ENCODE measurements at regions of chr5 and their contacts with region 1.

Region 1: GRCh38 chr5:113513384-113514288 is at the start of gene YTHDC2:
- DNase-seq: peak; percentile 92
- ATAC-seq: peak; percentile 94
- H3K4me3 Mint-ChIP-seq: peak within 1 kb of the TSS; percentile 93
- H3K27ac Mint-ChIP-seq: peak within 1 kb of the TSS; percentile 93
- H3K4me1 Mint-ChIP-seq: peaks cover 25% of the 10 kb centered on the region
- H3K27me3 Mint-ChIP-seq: peaks cover 7% of the 10 kb centered on the region
- CTCF ChIP-seq: no peak
- total RNA-seq, gene YTHDC2: 26.8 to 28.2 TPM

Region 2: GRCh38 chr5:113022661-113023060 is 491.0 kb before region 1 on chr5:
- CTCF ChIA-PET with region 1: no interaction called
- POLR2A ChIA-PET with region 1: no interaction called
- intact Hi-C with region 1: loop called (anchors 10 kb)
- DNase-seq: no peak
- ATAC-seq: peak; percentile 86
- H3K4me3 Mint-ChIP-seq: no peak overlapping the region
- H3K27ac Mint-ChIP-seq: peak overlapping the region; percentile 57
- H3K4me1 Mint-ChIP-seq: peaks cover 58% of the 10 kb centered on the region
- H3K27me3 Mint-ChIP-seq: no peaks in the 10 kb centered on the region
- CTCF ChIP-seq: no peak

Region 3: DNA sequence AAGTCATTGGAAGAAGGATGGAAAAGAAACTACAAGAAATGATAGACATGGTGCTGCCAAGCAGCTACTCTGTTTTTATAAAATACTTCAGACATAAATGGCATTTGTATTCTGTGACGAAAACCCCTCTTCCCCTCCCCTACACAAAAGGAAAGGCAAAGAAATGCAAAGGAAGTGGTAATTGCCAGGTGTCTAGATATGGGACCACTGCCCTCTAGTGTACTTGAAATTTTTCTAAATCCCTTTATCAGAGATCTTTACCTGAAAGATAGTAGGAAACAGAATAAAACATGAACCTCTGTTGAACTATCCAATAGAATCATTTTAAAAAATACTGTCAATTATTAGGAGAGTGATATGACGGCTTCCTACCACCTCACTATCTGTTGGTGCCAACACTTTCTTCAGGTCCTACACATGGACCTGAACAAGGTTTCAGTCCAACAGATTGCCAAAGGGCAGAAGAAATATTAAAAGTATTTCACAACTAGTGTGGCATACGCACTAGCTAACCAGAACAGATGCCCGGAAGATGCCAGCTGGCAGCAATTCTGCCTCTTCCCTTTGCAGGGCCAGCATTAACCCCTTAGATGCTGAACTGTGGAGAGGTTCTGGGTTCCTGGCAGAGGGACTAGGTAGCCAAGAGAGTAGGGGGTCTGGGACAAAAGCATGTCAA is 183.0 kb before region 1 on chr5:
- CTCF ChIA-PET with region 1: interaction called, 15 read pairs
- POLR2A ChIA-PET with region 1: no interaction called
- intact Hi-C with region 1: loop called (anchors 5 kb)
- DNase-seq: no peak
- ATAC-seq: peak; percentile 89
- H3K4me3 Mint-ChIP-seq: no peak overlapping the region
- H3K27ac Mint-ChIP-seq: no peak overlapping the region
- H3K4me1 Mint-ChIP-seq: peaks cover 11% of the 10 kb centered on the region
- H3K27me3 Mint-ChIP-seq: no peaks in the 10 kb centered on the region
- CTCF ChIP-seq: peak; percentile 61

Region 4: DNA sequence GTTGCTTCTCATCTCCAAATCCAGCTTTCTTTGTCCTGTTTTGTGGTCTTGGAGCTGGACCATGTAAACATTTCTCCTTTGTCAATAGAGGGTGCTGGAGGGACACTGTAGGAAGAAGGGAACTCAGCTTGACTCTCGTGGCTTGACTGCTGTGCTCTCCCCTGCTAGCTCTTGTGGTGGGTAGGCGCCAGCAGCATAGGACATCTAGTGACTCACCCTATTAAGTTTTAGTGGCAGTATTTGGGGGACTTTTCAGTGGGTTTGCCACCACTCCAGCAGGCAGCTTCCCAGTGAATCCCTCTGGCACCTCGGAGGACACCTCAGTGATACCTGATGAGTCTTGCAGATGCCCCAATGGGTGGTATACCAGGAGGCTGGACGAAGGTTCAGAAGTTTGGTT is 176.7 kb before region 1 on chr5:
- CTCF ChIA-PET with region 1: interaction called, 15 read pairs
- POLR2A ChIA-PET with region 1: no interaction called
- intact Hi-C with region 1: loop called (anchors 5 kb)
- DNase-seq: peak; percentile 11
- ATAC-seq: peak; percentile 71
- H3K4me3 Mint-ChIP-seq: no peak overlapping the region
- H3K27ac Mint-ChIP-seq: no peak overlapping the region
- H3K4me1 Mint-ChIP-seq: peaks cover 4% of the 10 kb centered on the region
- H3K27me3 Mint-ChIP-seq: peaks cover 10% of the 10 kb centered on the region
- CTCF ChIP-seq: no peak

Region 5: GRCh38 chr5:113378959-113379541 is 134.6 kb before region 1 on chr5:
- CTCF ChIA-PET with region 1: interaction called, 31 read pairs
- POLR2A ChIA-PET with region 1: no interaction called
- intact Hi-C with region 1: loop called (anchors 1 kb)
- DNase-seq: peak; percentile 76
- ATAC-seq: peak; percentile 76
- H3K4me3 Mint-ChIP-seq: no peak overlapping the region
- H3K27ac Mint-ChIP-seq: no peak overlapping the region
- H3K4me1 Mint-ChIP-seq: peaks cover 26% of the 10 kb centered on the region
- H3K27me3 Mint-ChIP-seq: peaks cover 22% of the 10 kb centered on the region
- CTCF ChIP-seq: peak; percentile 84

Region 6: DNA sequence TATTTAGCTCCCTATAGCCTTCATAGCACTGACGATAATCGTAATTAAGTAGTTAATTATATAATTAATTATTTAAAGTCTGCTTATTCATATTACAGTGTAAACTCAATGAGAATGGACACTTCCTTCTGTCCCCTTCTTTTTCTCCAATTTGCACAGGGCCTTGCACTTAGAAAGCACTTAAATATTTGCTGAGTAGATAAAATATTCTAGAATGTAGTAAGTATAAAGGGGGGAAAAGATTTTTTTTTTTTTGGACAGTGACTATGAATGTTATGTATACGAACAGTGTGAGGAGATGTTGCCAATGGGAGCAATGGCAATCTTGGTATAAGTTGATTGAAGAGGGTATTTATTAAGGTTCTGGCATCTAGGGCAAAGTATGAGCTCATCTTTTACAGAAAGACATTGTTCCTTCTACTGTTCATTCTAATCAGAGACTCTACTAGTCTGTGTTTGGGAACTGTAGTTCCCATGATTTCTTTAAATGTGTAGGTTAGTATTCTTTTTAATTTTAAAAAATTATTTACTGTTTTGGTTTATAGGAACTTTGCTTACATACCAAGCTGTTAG is 49.3 kb after region 1 on chr5:
- CTCF ChIA-PET with region 1: no interaction called
- POLR2A ChIA-PET with region 1: no interaction called
- intact Hi-C with region 1: no loop called
- DNase-seq: no peak
- ATAC-seq: no peak
- H3K4me3 Mint-ChIP-seq: no peak overlapping the region
- H3K27ac Mint-ChIP-seq: no peak overlapping the region
- H3K4me1 Mint-ChIP-seq: no peaks in the 10 kb centered on the region
- H3K27me3 Mint-ChIP-seq: no peaks in the 10 kb centered on the region
- CTCF ChIP-seq: no peak

Region 7: DNA sequence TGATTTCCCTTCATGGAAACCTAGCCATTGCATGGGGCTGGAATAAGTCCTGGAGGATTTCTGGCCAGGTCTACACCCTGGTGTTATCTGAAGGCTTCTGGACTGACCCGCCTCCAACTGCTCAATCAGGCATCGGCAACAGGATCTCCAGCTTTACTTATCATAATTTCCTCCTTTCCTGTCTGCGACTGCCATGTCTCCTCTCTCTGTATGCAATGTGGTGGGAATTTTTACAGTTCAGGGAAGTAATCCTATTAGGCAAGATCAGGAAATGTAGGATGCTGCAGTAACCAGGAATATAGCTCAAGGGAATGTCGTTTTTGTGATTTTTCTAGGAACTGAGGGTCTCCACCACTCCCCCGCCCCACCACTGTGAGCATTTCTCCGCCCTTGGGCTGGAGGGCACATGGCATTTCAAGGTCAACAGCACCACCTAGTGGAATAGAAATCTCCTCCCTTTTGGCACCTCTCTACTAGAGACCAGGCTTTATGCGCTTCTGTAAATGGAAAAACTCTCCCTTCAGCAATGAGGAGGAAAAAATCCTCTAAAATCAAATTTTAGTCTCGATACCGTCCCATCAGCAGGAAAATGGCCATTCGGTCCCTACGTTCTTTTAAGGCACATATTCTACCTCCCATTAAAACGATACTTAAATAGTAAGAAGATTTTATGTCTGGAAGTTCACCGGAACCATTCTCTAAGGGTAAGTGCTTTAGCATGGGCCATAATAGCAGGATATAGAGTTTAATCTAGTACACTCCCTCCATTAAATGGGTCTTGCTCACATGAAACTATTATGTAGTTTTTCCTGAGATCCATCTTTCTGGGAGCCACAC is 92.9 kb after region 1 on chr5:
- CTCF ChIA-PET with region 1: no interaction called
- POLR2A ChIA-PET with region 1: no interaction called
- intact Hi-C with region 1: loop called (anchors 5 kb)
- DNase-seq: peak; percentile 51
- ATAC-seq: peak; percentile 77
- H3K4me3 Mint-ChIP-seq: no peak overlapping the region
- H3K27ac Mint-ChIP-seq: no peak overlapping the region
- H3K4me1 Mint-ChIP-seq: peaks cover 5% of the 10 kb centered on the region
- H3K27me3 Mint-ChIP-seq: peaks cover 6% of the 10 kb centered on the region
- CTCF ChIP-seq: peak; percentile 87

Measured in activated CD8-positive, alpha-beta T cell treated with anti-CD3 and anti-CD28 coated beads for 36 hours (primary cell).